Activated CD4-positive, alpha-beta T cell treated with anti-CD3 and anti-CD28 coated beads, Interleukin-2, amount 10 ng/mL, durations not matched to agents 7 days and 5 days (primary cell): ENCODE measurements at regions of chr3 and their contacts with region 1.

Region 1: DNA sequence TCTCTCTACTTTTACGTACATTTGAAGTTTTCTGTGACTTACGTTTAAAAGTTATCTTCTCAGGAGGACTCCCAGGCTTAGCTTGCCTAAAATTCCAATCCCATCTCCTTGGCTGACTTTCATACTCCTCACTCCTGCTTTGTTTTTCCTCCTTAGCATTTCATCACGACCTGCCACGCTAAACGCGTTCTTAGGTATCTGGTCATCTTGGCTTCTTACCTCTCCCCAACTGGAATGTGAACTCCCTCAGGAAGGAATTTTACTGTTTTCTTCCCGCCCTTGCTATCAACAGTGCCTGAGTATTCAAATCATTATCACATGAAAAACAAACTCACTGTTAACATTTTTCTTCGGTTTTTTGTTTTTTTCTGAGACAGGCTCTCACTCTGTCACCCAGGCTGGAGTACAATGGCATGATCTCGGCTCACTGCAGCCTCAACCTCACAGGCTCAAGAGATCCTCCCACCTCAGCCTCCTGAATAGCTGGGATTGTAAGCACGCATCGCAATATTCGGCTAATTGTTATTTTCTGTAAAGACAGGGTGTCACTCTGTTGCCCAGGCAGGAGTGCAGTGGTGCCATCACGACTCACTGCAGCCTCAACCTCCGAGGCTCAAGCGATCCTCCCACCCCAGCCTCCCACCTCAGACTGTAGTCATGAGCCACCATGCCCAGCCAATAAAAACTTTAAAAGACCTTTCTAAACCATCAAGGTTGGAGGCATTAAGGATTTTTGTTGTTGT is 57.2 kb upstream of the TFRC start:
- DNase-seq: no peak
- H3K4me3 Mint-ChIP-seq: no peak overlapping the region
- H3K27ac Mint-ChIP-seq: no peak overlapping the region
- H3K4me1 Mint-ChIP-seq: peaks cover 17% of the 10 kb centered on the region
- H3K27me3 Mint-ChIP-seq: peaks cover 3% of the 10 kb centered on the region

Region 2: GRCh38 chr3:196156160-196156559 is 17.1 kb after region 1 on chr3:
- CTCF ChIA-PET with region 1: interaction called, 11 read pairs
- POLR2A ChIA-PET with region 1: no interaction called
- DNase-seq: no peak
- H3K4me3 Mint-ChIP-seq: no peak overlapping the region
- H3K27ac Mint-ChIP-seq: no peak overlapping the region
- H3K4me1 Mint-ChIP-seq: peaks cover 41% of the 10 kb centered on the region
- H3K27me3 Mint-ChIP-seq: no peaks in the 10 kb centered on the region

Region 3: DNA sequence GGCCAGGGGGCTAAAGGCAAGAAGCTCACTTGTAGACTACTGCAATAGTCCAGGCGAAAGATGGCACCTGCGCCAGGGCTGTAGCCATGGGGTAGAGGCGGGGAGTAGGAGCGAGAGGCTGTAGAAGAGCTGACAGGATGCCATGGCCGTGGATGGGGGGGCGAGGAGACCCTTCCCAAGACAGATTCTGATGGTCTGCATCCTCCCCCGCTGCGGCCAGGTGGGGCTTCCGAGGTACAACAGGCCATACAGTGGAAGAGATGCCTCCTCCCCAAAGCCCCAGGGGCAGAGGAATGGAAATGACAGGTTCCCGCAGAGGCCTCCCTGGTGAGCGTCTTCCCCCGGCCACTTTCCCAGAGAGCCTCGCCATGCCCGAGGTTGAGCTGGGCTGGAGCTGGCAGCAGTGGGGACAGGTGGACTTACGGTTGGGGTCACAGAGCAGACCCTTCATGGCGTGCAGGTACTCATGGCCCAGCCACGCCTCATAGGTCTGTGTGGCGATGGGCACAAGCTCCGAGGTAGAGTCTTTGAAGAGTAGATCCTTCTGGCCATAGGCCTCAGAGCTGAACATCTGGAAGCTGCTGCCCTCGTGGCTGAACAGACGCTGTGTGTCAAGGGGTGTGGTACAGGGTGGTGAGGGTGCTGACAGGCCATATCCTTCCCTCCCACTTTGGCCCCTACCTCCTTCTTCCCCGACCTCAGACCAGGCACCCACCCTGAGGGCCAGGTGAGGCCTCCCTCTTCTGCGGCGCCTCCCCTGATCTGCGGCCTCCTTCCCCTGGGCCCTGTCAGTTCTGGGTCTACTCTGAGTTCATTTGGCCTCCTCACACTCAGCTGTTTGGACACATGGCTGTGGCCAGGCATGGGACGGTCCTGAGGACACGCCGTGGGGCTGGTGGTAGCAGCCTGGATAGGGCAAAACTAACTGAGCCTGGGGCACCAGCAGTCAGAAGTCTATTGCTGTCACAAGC is 877.0 kb after region 1 on chr3:
- CTCF ChIA-PET with region 1: no interaction called
- POLR2A ChIA-PET with region 1: interaction called, 10 read pairs
- DNase-seq: no peak
- H3K4me3 Mint-ChIP-seq: no peak overlapping the region
- H3K27ac Mint-ChIP-seq: peak overlapping the region; percentile 64
- H3K4me1 Mint-ChIP-seq: no peaks in the 10 kb centered on the region
- H3K27me3 Mint-ChIP-seq: no peaks in the 10 kb centered on the region